Head of caudate nucleus (tissue), 42 donors: ENCODE measurements at regions of chr22 and their contacts with region 1.

Region 1: DNA sequence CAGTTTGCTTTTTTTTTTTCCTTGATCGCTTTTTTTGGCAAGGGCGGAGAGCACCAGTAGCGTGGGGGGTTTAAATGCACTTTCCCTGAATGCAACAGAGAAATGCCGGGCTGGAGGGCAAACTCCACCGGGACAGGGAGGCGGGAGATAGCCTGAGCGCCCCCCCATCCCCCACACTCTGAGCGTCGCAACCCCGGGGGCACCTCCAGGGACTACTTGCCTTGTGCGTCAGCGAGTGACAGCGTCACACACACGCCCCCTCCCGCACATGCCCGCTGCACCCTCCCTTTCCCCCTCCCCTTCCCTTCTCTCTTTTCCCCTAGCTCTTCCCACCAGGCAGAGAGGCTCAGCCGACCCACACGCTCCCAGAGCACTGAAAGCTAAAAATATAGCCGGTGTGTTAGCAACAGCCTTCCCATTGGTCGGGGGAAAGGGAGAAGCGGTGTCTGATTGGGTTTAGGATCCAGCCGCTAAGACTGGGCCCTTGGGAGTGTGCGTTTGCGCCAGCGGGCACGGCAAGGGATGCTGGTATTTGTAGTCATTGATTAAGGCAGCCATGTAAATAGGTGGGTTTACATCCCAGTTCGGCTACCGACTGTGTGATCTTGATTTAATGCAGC is 1.7 kb upstream of the TOB2 start:
- DNase-seq: peak; percentile 88 to 99 (median 98)

Region 2: GRCh38 chr22:41397143-41397811 is 51.0 kb before region 1 on chr22:
- intact Hi-C with region 1: no loop called
- DNase-seq: no peak

Region 3: GRCh38 chr22:41468381-41469217 is 20.3 kb after region 1 on chr22 and contains the starts of genes ACO2 and PHF5A:
- intact Hi-C with region 1: loop called (anchors 2 kb)
- DNase-seq: peak; percentile 95 to 99 (median 98)